ENCODE measurements at regions of chr5 and their contacts with region 1.

Region 1: GRCh38 chr5:151094054-151094851 is 13.4 kb upstream of the TNIP1 start:
- DNase-seq: peak; percentile 51
- H3K4me3 Mint-ChIP-seq: peak overlapping the region; percentile 17
- H3K27ac Mint-ChIP-seq: peak overlapping the region; percentile 67
- H3K4me1 Mint-ChIP-seq: peaks cover 67% of the 10 kb centered on the region
- H3K27me3 Mint-ChIP-seq: no peaks in the 10 kb centered on the region

Region 2: GRCh38 chr5:151110122-151110681 is 15.9 kb after region 1 on chr5:
- CTCF ChIA-PET with region 1: interaction called, 27 read pairs
- POLR2A ChIA-PET with region 1: no interaction called
- DNase-seq: no peak
- H3K4me3 Mint-ChIP-seq: no peak overlapping the region
- H3K27ac Mint-ChIP-seq: no peak overlapping the region
- H3K4me1 Mint-ChIP-seq: no peaks in the 10 kb centered on the region
- H3K27me3 Mint-ChIP-seq: no peaks in the 10 kb centered on the region

Measured in activated CD4-positive, alpha-beta T cell treated with anti-CD3 and anti-CD28 coated beads, Interleukin-2, amount 10 ng/mL, durations not matched to agents 7 days and 5 days (primary cell).